CD8-positive, alpha-beta memory T cell (primary cell): ENCODE measurements at regions of chr5 and their contacts with region 1.

Region 1: DNA sequence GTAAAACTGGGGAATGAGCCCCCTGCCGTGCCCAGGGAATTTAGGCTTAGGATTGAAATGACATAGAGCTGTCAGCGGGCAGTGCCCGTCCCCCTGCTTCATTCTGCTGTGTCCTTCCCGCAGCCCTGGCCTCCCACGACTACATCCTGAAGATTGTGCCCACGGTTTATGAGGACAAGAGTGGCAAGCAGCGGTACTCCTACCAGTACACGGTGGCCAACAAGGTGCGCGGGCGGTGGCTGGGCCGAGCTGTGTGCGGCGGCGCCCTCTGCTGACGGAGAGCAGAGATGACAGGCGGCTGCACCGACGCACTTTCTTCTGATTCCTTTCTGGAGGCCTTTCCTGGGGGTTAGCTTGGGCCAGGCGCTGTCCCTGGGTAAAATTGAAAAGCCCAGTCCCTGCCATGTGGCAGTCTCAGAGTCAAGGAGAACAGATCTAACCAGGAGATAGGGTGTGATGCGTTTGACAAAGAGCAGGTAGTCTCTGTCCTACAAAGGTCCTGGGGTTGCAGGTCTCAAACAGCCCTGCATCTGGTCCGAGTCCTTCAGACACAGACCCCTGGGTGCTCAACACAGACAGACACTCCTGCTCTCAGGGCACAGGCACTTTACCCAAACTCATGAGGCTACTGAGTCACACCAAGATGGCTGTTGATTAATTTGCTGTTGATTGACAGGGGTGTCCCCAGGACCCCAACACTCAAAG is 26.8 kb upstream of the RPL26L1 start:
- DNase-seq: peak; percentile 57 to 80 (median 67)
- H3K4me3 ChIP-seq: no peak overlapping the region
- H3K4me3 Mint-ChIP-seq: no peak overlapping the region
- H3K27ac ChIP-seq: no peak overlapping the region
- H3K27ac Mint-ChIP-seq: peak overlapping the region in 7 of 8 donors; percentile 38 to 85 (median 68)
- H3K4me1 ChIP-seq: no peaks in the 10 kb centered on the region
- H3K4me1 Mint-ChIP-seq: peaks cover 6 to 7% (median 7%) of the 10 kb centered on the region in 3 donors
- H3K27me3 ChIP-seq: no peaks in the 10 kb centered on the region
- H3K27me3 Mint-ChIP-seq: no peaks in the 10 kb centered on the region

Region 2: DNA sequence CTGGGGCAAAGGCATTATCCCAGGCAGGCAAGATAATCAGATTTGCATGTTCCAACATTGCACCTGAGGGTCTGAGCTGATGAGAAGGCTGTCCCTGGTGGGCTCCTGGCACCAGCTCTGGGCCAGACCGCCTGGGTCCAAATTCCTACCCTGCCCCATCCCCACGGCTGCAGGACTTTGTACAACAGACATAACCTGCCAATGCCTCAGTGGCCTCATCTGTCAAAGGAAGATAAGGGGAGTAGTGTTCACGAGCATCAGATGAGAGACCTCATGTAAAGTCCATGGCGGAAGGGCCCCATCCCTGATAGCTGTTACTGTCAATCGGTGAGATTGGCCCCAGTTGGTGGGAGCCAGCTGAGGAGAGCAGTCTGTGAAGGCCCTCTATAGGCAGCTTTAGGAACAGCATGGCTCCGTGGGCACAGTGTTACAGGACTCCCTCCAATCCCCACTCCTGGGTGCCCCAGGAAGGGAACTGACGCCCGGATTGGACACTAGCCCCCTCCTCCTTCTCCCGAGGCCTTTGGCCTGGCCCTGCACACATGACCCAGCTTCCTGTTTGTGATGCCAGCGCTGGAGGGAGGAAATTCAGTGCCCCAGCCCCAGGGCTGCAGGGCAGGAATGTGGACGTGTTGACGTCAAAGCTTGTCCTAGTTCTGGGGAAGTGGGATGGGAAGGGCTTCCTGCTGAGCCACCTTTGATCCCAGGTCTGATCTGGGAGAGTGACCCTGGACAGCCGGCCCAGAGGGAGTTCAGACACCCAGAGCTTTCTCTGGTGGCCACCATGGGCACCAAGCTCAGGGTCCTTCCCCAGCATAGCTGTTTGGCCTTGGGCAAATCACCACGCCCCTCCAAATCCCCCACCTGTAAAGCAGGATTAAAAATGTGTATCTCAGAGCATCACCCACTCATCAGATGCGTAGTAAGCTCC is 217.7 kb before region 1 on chr5:
- CTCF ChIA-PET with region 1: interaction called, 270 read pairs
- POLR2A ChIA-PET with region 1: interaction called, 8 read pairs
- DNase-seq: peak; percentile 50 to 74 (median 52)
- H3K4me3 ChIP-seq: no peak overlapping the region
- H3K4me3 Mint-ChIP-seq: peak overlapping the region in 1 of 7 donors; percentile 1
- H3K27ac ChIP-seq: no peak overlapping the region
- H3K27ac Mint-ChIP-seq: peak overlapping the region in 6 of 8 donors; percentile 12 to 82 (median 59)
- H3K4me1 ChIP-seq: peaks cover 12% of the 10 kb centered on the region
- H3K4me1 Mint-ChIP-seq: peaks cover 15 to 20% (median 18%) of the 10 kb centered on the region in 3 donors
- H3K27me3 ChIP-seq: no peaks in the 10 kb centered on the region
- H3K27me3 Mint-ChIP-seq: peaks cover 2 to 21% of the 10 kb centered on the region in 2 donors

Region 3: GRCh38 chr5:172764849-172765765 is 167.4 kb before region 1 on chr5:
- CTCF ChIA-PET with region 1: interaction called, 56 read pairs
- POLR2A ChIA-PET with region 1: interaction called, 6 read pairs
- DNase-seq: peak; percentile 94 to 99 (median 98)
- H3K4me3 ChIP-seq: peak overlapping the region; percentile 60
- H3K4me3 Mint-ChIP-seq: peak overlapping the region; percentile 80 to 98 (median 94)
- H3K27ac ChIP-seq: peak overlapping the region; percentile 92
- H3K27ac Mint-ChIP-seq: peak overlapping the region; percentile 98 to 100 (median 99)
- H3K4me1 ChIP-seq: peaks cover 41% of the 10 kb centered on the region
- H3K4me1 Mint-ChIP-seq: peaks cover 50 to 65% (median 56%) of the 10 kb centered on the region in 3 donors
- H3K27me3 ChIP-seq: no peaks in the 10 kb centered on the region
- H3K27me3 Mint-ChIP-seq: peaks cover 0 to 23% of the 10 kb centered on the region in 2 donors

Region 4: GRCh38 chr5:172777881-172778814 is 154.3 kb before region 1 on chr5:
- CTCF ChIA-PET with region 1: interaction called, 56 read pairs
- POLR2A ChIA-PET with region 1: interaction called, 5 read pairs
- DNase-seq: no peak
- H3K4me3 ChIP-seq: peak overlapping the region; percentile 7
- H3K4me3 Mint-ChIP-seq: peak overlapping the region; percentile 45 to 74 (median 68)
- H3K27ac ChIP-seq: peak overlapping the region; percentile 74
- H3K27ac Mint-ChIP-seq: peak overlapping the region; percentile 93 to 99 (median 96)
- H3K4me1 ChIP-seq: peaks cover 35% of the 10 kb centered on the region
- H3K4me1 Mint-ChIP-seq: peaks cover 45 to 49% (median 47%) of the 10 kb centered on the region in 3 donors
- H3K27me3 ChIP-seq: no peaks in the 10 kb centered on the region
- H3K27me3 Mint-ChIP-seq: no peaks in the 10 kb centered on the region

Region 5: DNA sequence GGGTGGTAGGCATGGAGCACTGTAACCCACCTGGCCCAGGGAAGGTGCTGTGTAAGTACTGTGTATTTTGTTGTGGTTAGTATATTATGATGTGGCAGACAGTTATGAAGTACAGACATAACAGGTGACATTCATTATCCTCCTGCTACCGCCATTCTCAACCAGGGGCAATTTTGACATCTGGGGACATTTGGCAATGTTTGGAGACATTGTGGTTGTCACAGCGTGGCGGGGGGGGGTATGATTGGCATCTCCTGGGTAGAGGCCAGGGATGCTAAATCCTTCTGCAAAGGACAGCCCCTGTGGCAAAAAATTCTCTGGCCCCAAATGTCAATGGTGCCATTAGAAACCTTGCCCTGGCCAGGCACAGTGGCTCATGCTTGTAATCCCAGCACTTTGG is 17.0 kb after region 1 on chr5:
- CTCF ChIA-PET with region 1: interaction called, 17 read pairs
- POLR2A ChIA-PET with region 1: no interaction called
- DNase-seq: no peak
- H3K4me3 ChIP-seq: no peak overlapping the region
- H3K4me3 Mint-ChIP-seq: no peak overlapping the region
- H3K27ac ChIP-seq: no peak overlapping the region
- H3K27ac Mint-ChIP-seq: peak overlapping the region in 1 of 8 donors; percentile 60
- H3K4me1 ChIP-seq: no peaks in the 10 kb centered on the region
- H3K4me1 Mint-ChIP-seq: no peaks in the 10 kb centered on the region
- H3K27me3 ChIP-seq: no peaks in the 10 kb centered on the region
- H3K27me3 Mint-ChIP-seq: peaks cover 0 to 2% of the 10 kb centered on the region in 2 donors